ENCODE measurements at regions of chr14 and their contacts with region 1.

Region 1: DNA sequence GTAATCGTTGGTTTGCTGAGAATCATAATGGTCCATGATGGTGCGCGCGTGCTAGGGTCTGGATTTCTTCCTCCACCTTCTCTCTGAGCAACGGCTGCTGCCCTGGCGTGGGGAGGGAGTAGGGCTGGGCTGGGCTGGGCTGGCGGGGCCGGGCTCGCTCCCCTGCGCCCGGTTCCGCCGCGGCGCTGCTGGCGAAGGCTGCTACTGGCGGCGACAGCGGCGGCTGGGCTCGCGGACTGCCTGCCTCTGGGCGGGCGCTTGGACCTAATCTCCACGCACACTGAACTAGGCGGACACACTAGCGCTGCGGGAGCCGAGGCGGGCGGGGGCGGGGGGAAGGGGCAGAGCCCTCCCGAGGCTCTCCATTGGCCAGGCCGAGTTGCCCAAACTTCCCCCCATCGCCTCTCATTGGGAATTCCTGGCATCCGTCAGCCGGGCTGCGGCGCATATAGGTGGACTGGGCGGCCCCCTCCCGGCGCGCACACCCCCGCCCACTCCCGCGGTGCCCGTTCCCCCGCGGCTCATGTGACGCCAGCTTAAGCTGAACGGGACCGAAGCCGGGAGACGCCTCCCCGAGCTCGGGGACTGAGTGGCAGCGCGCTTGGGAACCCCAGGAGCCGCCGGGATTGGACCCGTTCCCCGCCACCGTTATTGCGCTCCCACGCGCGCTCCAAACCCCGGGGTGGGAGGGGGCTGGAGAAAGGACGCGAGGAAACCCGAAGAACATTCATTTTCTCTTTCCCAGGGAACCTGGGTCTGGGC is at the start of gene ACTN1:
- DNase-seq: peak; percentile 85 to 91
- ATAC-seq: peak; percentile 82 to 84
- H3K4me3 ChIP-seq: peak within 1 kb of the TSS; percentile 75 to 99 (median 88)
- H3K27ac ChIP-seq: peak within 1 kb of the TSS; percentile 79 to 89 (median 80)
- H3K4me1 ChIP-seq: no peaks in the 10 kb centered on the region
- H3K27me3 ChIP-seq: no peaks in the 10 kb centered on the region
- CTCF ChIP-seq: no peak
- POLR2A ChIP-seq: peak; percentile 65 to 86
- total RNA-seq, gene ACTN1: 10.0 to 17.3 (median 14.1) TPM

Region 2: DNA sequence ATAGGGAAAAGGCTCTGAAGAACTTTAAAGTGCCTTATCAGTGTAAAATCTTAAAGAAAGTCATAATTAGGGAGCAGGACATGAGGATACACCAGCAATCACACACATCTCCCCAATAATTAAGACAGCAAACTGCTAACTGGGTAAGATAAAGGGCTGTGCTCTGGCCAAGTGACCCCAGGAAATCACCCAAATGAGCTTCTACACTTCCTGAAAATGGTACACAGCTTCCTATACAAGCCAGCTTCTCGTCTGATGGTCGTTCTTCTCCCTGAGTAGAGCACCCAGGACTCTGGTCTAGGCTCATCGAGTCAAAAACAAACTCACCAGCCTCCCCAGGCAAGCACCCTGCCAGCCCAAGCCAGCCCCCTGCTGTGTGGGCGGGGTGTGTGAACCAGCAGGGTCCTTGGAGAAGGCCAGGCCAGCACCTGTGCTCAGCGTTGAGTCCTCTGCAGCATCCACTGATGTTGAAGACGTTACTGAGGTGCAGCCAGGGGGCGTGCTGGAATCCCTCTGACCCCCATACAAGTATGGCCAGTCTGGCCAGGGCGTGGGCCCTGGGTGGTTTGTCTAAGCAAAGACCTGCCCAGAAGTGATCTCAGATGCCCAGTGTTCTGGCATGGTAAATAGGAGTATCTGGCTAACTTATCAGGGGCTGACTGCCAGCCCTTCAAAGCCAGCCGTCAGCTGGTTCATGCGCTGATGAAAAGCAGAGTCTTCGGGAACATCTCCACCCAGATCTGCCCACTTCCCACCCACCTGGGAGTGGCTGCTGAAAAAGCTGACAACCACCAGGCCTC is 41.5 kb before region 1 on chr14:
- in situ Hi-C with region 1: no loop called
- intact Hi-C with region 1: loop called (anchors 2 kb)
- DNase-seq: no peak
- ATAC-seq: peak; percentile 17 to 36
- H3K4me3 ChIP-seq: no peak overlapping the region
- H3K27ac ChIP-seq: peak overlapping the region; percentile 65 to 81 (median 74)
- H3K4me1 ChIP-seq: peaks cover 21 to 33% of the 10 kb centered on the region in 2 donors
- H3K27me3 ChIP-seq: no peaks in the 10 kb centered on the region
- CTCF ChIP-seq: peak in 2 of 5 experiments; percentile 23 to 35
- POLR2A ChIP-seq: no peak

Region 3: GRCh38 chr14:69048456-69048855 is 69.3 kb after region 1 on chr14:
- in situ Hi-C with region 1: no loop called
- intact Hi-C with region 1: loop called (anchors 2 kb)
- DNase-seq: no peak
- ATAC-seq: no peak
- H3K4me3 ChIP-seq: no peak overlapping the region
- H3K27ac ChIP-seq: peak overlapping the region; percentile 60 to 78 (median 74)
- H3K4me1 ChIP-seq: peaks cover 62 to 73% of the 10 kb centered on the region in 2 donors
- H3K27me3 ChIP-seq: no peaks in the 10 kb centered on the region
- CTCF ChIP-seq: no peak
- POLR2A ChIP-seq: no peak

Region 4: GRCh38 chr14:69090187-69090789 is 111.1 kb after region 1 on chr14:
- in situ Hi-C with region 1: no loop called
- intact Hi-C with region 1: loop called (anchors 2 kb)
- DNase-seq: no peak
- ATAC-seq: no peak
- H3K4me3 ChIP-seq: no peak overlapping the region
- H3K27ac ChIP-seq: no peak overlapping the region
- H3K4me1 ChIP-seq: peaks cover 14 to 36% of the 10 kb centered on the region in 2 donors
- H3K27me3 ChIP-seq: no peaks in the 10 kb centered on the region
- CTCF ChIP-seq: peak; percentile 24 to 64 (median 44)
- POLR2A ChIP-seq: no peak